ENCODE measurements at regions of chr12 and their contacts with region 1.

Region 1: GRCh38 chr12:69570545-69571399 is 14.5 kb upstream of the CCT2 start:
- DNase-seq: peak; percentile 75 to 86 (median 80)
- H3K4me3 ChIP-seq: no peak overlapping the region
- H3K27ac ChIP-seq: no peak overlapping the region
- H3K4me1 ChIP-seq: no peaks in the 10 kb centered on the region
- H3K27me3 ChIP-seq: no peaks in the 10 kb centered on the region

Region 2: GRCh38 chr12:69359531-69360347 is 211.0 kb before region 1 on chr12 and contains the start of gene YEATS4:
- CTCF ChIA-PET with region 1: interaction called, 10 read pairs
- POLR2A ChIA-PET with region 1: no interaction called
- DNase-seq: peak; percentile 87 to 94 (median 94)
- H3K4me3 ChIP-seq: peak within 1 kb of the TSS; percentile 80 to 95 (median 93)
- H3K27ac ChIP-seq: peak within 1 kb of the TSS; percentile 86 to 93
- H3K4me1 ChIP-seq: peaks cover 1 to 15% (median 8%) of the 10 kb centered on the region in 4 experiments
- H3K27me3 ChIP-seq: no peaks in the 10 kb centered on the region

Region 3: DNA sequence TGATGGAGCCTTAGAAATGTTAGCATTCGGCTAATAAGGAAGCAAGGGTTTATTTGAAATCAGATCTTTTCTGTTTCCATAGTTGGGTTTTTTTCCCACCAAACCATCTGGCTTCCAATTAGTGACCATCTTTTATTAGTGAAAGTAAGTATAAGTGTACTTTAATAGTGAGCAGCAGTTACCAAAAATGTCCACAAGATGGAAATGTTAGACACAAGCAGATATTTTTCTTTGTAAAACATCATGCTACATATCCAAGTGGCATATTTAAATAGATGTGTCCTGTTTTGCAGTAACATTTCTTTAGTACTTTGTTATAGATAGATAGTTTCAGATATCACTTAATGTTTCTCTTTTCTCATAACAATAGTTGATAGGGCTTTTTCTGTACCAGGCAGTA is 182.4 kb before region 1 on chr12:
- CTCF ChIA-PET with region 1: interaction called, 71 read pairs
- POLR2A ChIA-PET with region 1: no interaction called
- DNase-seq: peak; percentile 55 to 75 (median 74)
- H3K4me3 ChIP-seq: no peak overlapping the region
- H3K27ac ChIP-seq: no peak overlapping the region
- H3K4me1 ChIP-seq: no peaks in the 10 kb centered on the region
- H3K27me3 ChIP-seq: no peaks in the 10 kb centered on the region

Region 4: GRCh38 chr12:69421550-69421949 is 149.2 kb before region 1 on chr12:
- CTCF ChIA-PET with region 1: interaction called, 13 read pairs
- POLR2A ChIA-PET with region 1: no interaction called
- DNase-seq: no peak
- H3K4me3 ChIP-seq: no peak overlapping the region
- H3K27ac ChIP-seq: no peak overlapping the region
- H3K4me1 ChIP-seq: peaks cover 0 to 5% (median 0%) of the 10 kb centered on the region in 4 experiments
- H3K27me3 ChIP-seq: no peaks in the 10 kb centered on the region

Region 5: GRCh38 chr12:69470189-69471075 is 100.3 kb before region 1 on chr12 and contains the start of gene FRS2:
- CTCF ChIA-PET with region 1: interaction called, 12 read pairs
- POLR2A ChIA-PET with region 1: interaction called, 4 read pairs
- DNase-seq: peak; percentile 79 to 88 (median 84)
- H3K4me3 ChIP-seq: peak within 1 kb of the TSS; percentile 83 to 99 (median 92)
- H3K27ac ChIP-seq: peak within 1 kb of the TSS; percentile 93 to 96
- H3K4me1 ChIP-seq: peaks cover 16 to 22% (median 18%) of the 10 kb centered on the region in 4 experiments
- H3K27me3 ChIP-seq: no peaks in the 10 kb centered on the region

Region 6: GRCh38 chr12:69484428-69484827 is 86.3 kb before region 1 on chr12:
- CTCF ChIA-PET with region 1: no interaction called
- POLR2A ChIA-PET with region 1: no interaction called
- DNase-seq: no peak
- H3K4me3 ChIP-seq: no peak overlapping the region
- H3K27ac ChIP-seq: no peak overlapping the region
- H3K4me1 ChIP-seq: no peaks in the 10 kb centered on the region
- H3K27me3 ChIP-seq: no peaks in the 10 kb centered on the region

Region 7: DNA sequence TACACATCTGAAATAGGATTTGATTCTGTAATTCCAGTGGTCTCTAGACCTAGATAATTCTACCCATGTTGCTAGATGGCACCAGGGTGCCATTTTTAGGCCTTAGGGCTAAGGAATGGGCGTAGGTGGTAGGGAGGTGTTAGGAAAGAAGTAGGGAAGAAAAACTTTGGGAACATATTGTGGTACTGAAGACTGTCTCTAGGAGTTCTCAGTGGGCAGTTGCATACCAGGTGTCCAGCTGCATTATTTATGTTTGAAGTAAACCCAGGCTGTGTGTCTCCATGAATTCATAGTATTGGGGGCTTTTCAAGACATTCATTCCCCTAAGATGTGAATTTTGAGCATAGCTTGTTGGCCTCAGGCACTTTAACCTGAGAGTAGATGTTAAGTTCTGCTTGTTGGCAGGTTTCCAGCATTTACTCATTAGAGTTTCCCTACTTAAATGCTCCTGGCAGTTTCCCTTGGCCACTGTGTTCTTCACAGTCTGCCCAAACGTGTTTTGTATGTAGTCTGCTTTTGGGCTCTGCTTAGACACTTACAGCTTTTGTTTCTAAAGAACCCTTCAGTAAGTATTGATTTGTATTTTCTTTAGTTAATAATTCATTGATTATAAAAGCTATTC is 17.0 kb before region 1 on chr12:
- CTCF ChIA-PET with region 1: interaction called, 24 read pairs
- POLR2A ChIA-PET with region 1: no interaction called
- DNase-seq: peak in 1 of 3 donors; percentile 13
- H3K4me3 ChIP-seq: no peak overlapping the region
- H3K27ac ChIP-seq: no peak overlapping the region
- H3K4me1 ChIP-seq: no peaks in the 10 kb centered on the region
- H3K27me3 ChIP-seq: no peaks in the 10 kb centered on the region

Region 8: DNA sequence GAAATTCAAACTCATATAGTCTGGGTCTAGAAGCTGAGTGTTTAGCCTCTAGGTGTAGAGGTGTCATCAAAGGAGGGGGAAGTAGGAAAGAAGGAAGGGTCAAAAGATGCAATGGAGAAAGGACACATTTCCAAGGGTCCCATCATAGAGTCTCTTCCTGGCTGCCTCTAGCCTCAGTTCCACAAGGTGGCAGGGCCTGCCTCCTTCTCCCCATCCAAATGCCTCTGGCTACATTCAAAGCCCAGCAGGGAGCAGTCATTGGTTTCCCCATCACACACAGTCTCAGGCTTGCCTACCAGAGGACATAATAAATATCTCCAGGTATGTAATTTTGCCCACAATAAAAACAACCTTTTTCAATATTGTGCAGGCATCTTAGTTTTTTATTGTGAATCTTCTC is 12.4 kb after region 1 on chr12:
- CTCF ChIA-PET with region 1: interaction called, 42 read pairs
- POLR2A ChIA-PET with region 1: no interaction called
- DNase-seq: peak in 1 of 3 donors; percentile 36
- H3K4me3 ChIP-seq: no peak overlapping the region
- H3K27ac ChIP-seq: no peak overlapping the region
- H3K4me1 ChIP-seq: peaks cover 6 to 11% (median 8%) of the 10 kb centered on the region in 4 experiments
- H3K27me3 ChIP-seq: no peaks in the 10 kb centered on the region

Region 9: GRCh38 chr12:70059373-70059772 is 488.6 kb after region 1 on chr12:
- CTCF ChIA-PET with region 1: no interaction called
- POLR2A ChIA-PET with region 1: no interaction called
- DNase-seq: no peak
- H3K4me3 ChIP-seq: no peak overlapping the region
- H3K27ac ChIP-seq: no peak overlapping the region
- H3K4me1 ChIP-seq: no peaks in the 10 kb centered on the region
- H3K27me3 ChIP-seq: no peaks in the 10 kb centered on the region